ENCODE measurements at regions of chr1 and their contacts with region 1.

Region 1: GRCh38 chr1:154589780-154590179 is 18.2 kb downstream of the ADAR start:
- DNase-seq: no peak
- H3K4me3 ChIP-seq: no peak overlapping the region
- H3K27ac ChIP-seq: no peak overlapping the region
- H3K4me1 ChIP-seq: no peaks in the 10 kb centered on the region
- H3K27me3 ChIP-seq: no peaks in the 10 kb centered on the region
- CTCF ChIP-seq: no peak
- EP300 ChIP-seq: no peak
- POLR2A ChIP-seq: no peak
- RAD21 ChIP-seq: no peak

Region 2: GRCh38 chr1:154574716-154575115 is 15.1 kb before region 1 on chr1:
- CTCF ChIA-PET with region 1: interaction called, 8 read pairs
- POLR2A ChIA-PET with region 1: interaction called, 23 read pairs
- DNase-seq: no peak
- H3K4me3 ChIP-seq: no peak overlapping the region
- H3K27ac ChIP-seq: no peak overlapping the region
- H3K4me1 ChIP-seq: peaks cover 0 to 3% (median 1%) of the 10 kb centered on the region in 4 experiments; a peak in 2 of 7 replicates
- H3K27me3 ChIP-seq: no peaks in the 10 kb centered on the region
- CTCF ChIP-seq: no peak
- EP300 ChIP-seq: no peak
- POLR2A ChIP-seq: no peak
- RAD21 ChIP-seq: no peak

Region 3: GRCh38 chr1:154607609-154608396 is 18.0 kb after region 1 on chr1 and contains the start of gene ADAR:
- CTCF ChIA-PET with region 1: interaction called, 21 read pairs
- POLR2A ChIA-PET with region 1: interaction called, 10 read pairs
- DNase-seq: peak in 1 of 2 experiments; percentile 69
- H3K4me3 ChIP-seq: peak within 1 kb of the TSS; percentile 65 to 96 (median 91)
- H3K27ac ChIP-seq: peak within 1 kb of the TSS; percentile 98
- H3K4me1 ChIP-seq: peaks cover 8 to 24% (median 15%) of the 10 kb centered on the region in 4 experiments; a peak in 6 of 7 replicates
- H3K27me3 ChIP-seq: no peaks in the 10 kb centered on the region
- CTCF ChIP-seq: no peak
- EP300 ChIP-seq: no peak
- POLR2A ChIP-seq: peak; percentile 76 to 81
- RAD21 ChIP-seq: no peak
- total RNA-seq, gene ADAR: 235 and 242 TPM in 2 replicates

Measured in H1 (cell line).